BJ (cell line): ENCODE measurements at regions of chr16 and their contacts with region 1.

Region 1: GRCh38 chr16:56657555-56658326 is at the start of gene MT1F:
- DNase-seq: no peak
- H3K4me3 ChIP-seq: peak within 1 kb of the TSS; percentile 40
- H3K27me3 ChIP-seq: peaks cover 23% of the 10 kb centered on the region
- CTCF ChIP-seq: no peak
- polyA plus RNA-seq, gene MT1F: 7.8 and 11.3 TPM in 2 replicates

Region 2: DNA sequence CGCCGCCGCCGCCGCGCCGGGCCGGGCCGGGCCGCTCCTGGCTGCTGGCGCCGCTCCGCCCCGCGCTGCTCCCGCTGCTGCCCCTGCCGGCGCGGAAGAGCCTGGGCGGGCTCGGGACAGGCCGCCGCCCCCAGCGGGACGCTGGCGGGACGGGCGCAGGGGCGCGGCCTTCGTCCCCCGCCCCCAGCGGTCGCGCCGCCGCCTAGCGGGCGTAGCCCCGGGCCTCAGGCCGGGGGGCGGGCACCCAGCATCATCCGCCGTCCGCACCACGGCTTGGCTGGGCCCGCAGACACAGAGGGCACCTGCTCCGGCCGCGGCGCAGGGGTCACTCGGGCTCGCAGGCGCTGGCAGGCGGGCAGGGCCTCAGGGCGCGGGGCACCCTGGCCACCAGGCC is 232.3 kb before region 1 on chr16 and contains the start of gene AMFR:
- CTCF ChIA-PET with region 1: no interaction called
- POLR2A ChIA-PET with region 1: no interaction called
- DNase-seq: peak; percentile 28
- H3K4me3 ChIP-seq: peak within 1 kb of the TSS; percentile 68
- H3K27me3 ChIP-seq: no peaks in the 10 kb centered on the region
- CTCF ChIP-seq: no peak
- polyA plus RNA-seq, gene AMFR: 90.8 and 130 TPM in 2 replicates

Region 3: DNA sequence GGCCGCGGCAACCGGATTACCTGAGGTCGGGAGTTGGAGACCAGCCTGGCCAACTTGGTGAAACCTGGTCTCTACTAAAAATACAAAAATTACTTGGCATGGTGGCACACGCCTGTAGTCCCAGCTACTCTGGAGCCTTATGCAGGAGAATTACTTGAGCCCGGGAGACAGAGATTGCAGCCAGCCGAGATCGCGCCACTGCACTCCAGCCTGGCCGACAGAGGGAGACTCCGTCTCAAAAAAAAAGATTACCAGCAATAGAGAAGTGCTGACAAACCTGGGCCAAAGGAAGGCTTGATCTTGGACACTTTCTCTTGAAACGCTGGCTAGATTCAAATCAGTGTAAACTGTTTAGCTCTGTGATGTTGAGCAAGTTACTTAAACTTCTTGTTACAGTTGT is 16.2 kb after region 1 on chr16:
- CTCF ChIA-PET with region 1: interaction called, 5 read pairs
- POLR2A ChIA-PET with region 1: interaction called, 16 read pairs
- DNase-seq: no peak
- H3K4me3 ChIP-seq: no peak overlapping the region
- H3K27me3 ChIP-seq: peaks cover 38% of the 10 kb centered on the region
- CTCF ChIP-seq: peak; percentile 53; the same call in 1 of the 2 replicates